Ovary (tissue), 10 donors: ENCODE measurements at regions of chr19 and their contacts with region 1.

Region 1: GRCh38 chr19:57992841-57993240 is 9.8 kb downstream of the ZNF606 start:
- DNase-seq: no peak
- H3K4me3 ChIP-seq: no peak overlapping the region
- H3K27ac ChIP-seq: no peak overlapping the region
- H3K4me1 ChIP-seq: no peaks in the 10 kb centered on the region
- H3K27me3 ChIP-seq: no peaks in the 10 kb centered on the region
- CTCF ChIP-seq: no peak
- EP300 ChIP-seq: no peak
- POLR2A ChIP-seq: no peak

Region 2: DNA sequence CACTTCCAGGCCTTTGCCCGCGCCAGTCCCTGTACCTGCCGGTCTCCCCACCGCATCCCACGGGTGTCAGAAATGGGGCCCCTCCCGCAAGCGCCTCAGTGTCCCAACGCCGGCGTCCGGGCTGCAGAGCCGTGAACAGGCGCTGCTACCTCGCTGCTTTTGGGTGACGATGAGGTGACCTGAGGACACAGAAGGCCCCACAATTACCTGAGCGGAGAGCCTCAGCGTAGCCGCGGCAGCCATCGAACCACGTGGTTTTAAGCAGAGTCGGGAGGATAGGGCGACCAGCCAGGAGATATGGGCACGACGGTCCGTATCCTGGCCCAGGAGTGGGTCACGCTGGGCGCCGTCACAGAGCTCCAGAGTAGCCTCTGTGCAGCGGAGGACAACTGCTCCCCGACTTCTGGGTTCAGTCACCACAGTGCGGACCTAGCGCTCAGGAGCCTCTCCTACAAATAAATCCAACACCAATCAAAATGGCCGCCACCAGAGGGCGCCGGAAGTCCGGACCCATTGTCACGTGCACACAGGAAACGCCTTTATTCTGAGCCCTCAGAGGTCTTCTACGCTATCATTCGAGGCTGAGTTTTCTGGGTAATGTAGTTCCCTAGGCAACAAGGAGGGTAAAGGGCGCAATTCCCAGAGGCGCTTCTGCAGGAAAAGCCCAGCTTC is 104.1 kb before region 1 on chr19 and contains the start of gene ZNF814:
- intact Hi-C with region 1: no loop called
- DNase-seq: peak; percentile 72 to 85 (median 78)
- H3K4me3 ChIP-seq: peak within 1 kb of the TSS; percentile 51
- H3K27ac ChIP-seq: no peak within 1 kb of the TSS
- H3K4me1 ChIP-seq: no peaks in the 10 kb centered on the region
- H3K27me3 ChIP-seq: no peaks in the 10 kb centered on the region
- CTCF ChIP-seq: peak in 2 of 3 donors; percentile 22 to 53
- EP300 ChIP-seq: no peak
- POLR2A ChIP-seq: no peak
- total RNA-seq, gene ZNF814: 10.7 to 31.6 (median 15.5) TPM

Region 3: DNA sequence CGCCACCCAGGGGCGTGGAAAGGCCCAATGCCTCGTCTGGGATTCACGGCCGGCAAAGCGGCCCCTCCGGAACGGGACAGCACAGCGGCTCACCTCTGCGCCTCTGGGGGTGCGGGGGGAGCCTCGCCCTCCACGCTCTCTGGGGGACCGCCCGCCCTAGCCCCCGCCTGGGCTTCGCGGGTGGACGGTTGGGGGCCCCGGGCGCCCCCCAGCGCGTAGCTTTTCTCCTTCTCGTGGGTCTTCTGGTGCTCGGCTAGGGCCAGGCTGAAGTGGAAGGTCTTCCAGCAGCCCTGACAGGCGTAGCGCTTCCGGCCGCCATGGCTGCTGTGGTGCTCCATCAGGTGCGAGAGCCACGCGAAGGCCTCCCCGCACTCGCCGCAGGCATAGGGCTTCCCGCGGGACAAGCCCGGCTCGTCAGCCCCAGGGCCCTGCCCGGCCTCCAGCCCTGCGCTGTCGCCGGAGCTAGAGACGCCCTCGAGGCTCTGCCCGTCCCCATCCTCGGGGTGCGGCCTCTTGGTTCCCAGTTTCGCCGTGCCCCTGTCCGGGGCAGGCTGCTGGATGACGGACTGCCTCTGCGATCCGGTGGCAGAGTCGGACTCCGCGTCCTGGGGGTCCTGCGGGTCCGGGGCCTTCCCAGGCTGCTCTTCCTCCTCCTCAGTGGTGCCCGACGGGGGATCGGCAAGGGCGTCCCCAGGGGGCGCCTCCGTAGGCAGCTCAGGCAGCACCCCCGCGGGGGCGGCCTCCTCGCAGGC is 91.9 kb after region 1 on chr19:
- intact Hi-C with region 1: loop called in 1 of 4 experiments (anchors 5 kb)
- DNase-seq: peak in 1 of 5 donors; percentile 22
- H3K4me3 ChIP-seq: no peak overlapping the region
- H3K27ac ChIP-seq: no peak overlapping the region
- H3K4me1 ChIP-seq: no peaks in the 10 kb centered on the region
- H3K27me3 ChIP-seq: no peaks in the 10 kb centered on the region
- CTCF ChIP-seq: no peak
- EP300 ChIP-seq: no peak
- POLR2A ChIP-seq: no peak